ENCODE measurements at regions of chr5 and their contacts with region 1.

Region 1: GRCh38 chr5:138641547-138642298 is 66.5 kb upstream of the HSPA9 start:
- DNase-seq: peak; percentile 70 to 83 (median 78)
- H3K4me3 ChIP-seq: no peak overlapping the region
- H3K27ac ChIP-seq: no peak overlapping the region
- H3K4me1 ChIP-seq: peaks cover 0 to 6% (median 5%) of the 10 kb centered on the region in 4 experiments
- H3K27me3 ChIP-seq: peaks cover 0 to 19% (median 8%) of the 10 kb centered on the region in 5 experiments

Region 2: GRCh38 chr5:138629392-138629791 is 12.3 kb before region 1 on chr5:
- CTCF ChIA-PET with region 1: interaction called, 10 read pairs
- POLR2A ChIA-PET with region 1: no interaction called
- DNase-seq: no peak
- H3K4me3 ChIP-seq: no peak overlapping the region
- H3K27ac ChIP-seq: no peak overlapping the region
- H3K4me1 ChIP-seq: no peaks in the 10 kb centered on the region
- H3K27me3 ChIP-seq: peaks cover 0 to 3% (median 0%) of the 10 kb centered on the region in 5 experiments

Region 3: DNA sequence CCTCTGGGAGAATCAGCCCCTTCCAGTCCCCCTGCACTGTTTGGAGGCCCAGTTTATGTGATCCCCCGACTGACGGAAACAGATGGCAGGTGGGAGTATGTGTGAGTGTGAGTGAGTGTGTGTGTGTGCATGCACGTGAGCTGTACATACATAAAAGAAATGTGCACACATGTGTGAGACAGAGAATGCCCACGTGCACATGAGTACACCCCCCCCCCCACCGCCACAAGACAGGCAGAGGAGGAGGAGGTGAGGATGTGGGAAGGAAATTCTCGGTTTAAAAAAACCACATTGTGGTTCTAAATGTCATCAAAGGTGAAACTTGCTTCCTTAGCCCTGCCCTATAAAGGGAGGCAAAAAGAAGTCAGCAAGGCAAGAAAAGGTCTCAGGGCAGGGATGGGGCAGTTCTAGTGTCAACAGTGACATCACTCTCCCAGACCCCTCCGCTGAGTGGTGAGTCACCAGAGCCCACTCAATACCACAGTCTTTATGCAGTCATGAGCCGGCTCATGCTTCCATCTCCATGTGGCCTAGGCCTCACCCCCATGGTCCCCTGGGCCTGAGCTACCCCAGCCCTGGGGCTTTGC is 12.7 kb after region 1 on chr5:
- CTCF ChIA-PET with region 1: interaction called, 21 read pairs
- POLR2A ChIA-PET with region 1: no interaction called
- DNase-seq: peak; percentile 81 to 94 (median 92)
- H3K4me3 ChIP-seq: no peak overlapping the region
- H3K27ac ChIP-seq: no peak overlapping the region
- H3K4me1 ChIP-seq: peaks cover 0 to 17% (median 15%) of the 10 kb centered on the region in 4 experiments
- H3K27me3 ChIP-seq: peaks cover 7 to 85% (median 36%) of the 10 kb centered on the region in 5 experiments

Measured in common myeloid progenitor, CD34-positive (primary cell).